ENCODE measurements at regions of chr2 and their contacts with region 1.

Region 1: DNA sequence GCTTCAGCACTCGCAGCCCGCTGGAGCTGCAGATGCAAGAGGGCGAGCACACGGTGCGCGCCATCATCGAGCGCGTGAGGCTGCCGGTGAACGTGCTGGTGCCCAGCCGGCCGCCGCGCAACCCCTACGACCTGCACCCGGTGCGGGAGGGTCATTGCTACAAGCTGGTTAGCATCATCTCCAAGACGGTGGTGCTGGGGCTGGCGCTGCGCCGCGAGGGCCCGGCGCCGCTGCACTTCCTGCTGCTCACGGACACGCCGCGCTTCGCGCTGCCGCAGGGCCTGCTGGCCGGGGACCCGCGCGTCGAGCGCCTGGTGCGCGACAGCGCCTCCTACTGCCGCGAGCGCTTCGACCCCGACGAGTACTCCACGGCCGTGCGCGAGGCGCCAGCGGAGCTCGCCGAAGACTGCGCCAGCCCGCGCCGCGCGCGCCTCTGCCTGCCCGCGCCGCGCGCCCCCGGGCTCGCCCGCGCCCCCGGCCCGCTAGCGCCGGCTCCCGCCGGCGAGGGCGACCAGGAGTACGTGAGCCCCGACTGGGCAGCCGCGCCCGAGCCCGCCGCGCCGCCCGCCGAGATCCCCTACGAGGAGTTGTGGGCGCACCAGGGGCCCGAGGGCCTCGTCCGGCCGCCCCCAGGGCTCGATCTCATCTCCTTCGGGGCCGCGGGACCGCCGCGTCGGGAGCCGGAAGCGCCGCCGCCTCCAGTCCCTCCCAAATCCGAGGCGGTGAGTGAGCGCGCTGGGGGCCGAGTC is 11.8 kb downstream of the GAREM2 start:
- DNase-seq: peak; percentile 7
- H3K4me3 ChIP-seq: peak overlapping the region; percentile 67
- CTCF ChIP-seq: peak; percentile 78

Region 2: DNA sequence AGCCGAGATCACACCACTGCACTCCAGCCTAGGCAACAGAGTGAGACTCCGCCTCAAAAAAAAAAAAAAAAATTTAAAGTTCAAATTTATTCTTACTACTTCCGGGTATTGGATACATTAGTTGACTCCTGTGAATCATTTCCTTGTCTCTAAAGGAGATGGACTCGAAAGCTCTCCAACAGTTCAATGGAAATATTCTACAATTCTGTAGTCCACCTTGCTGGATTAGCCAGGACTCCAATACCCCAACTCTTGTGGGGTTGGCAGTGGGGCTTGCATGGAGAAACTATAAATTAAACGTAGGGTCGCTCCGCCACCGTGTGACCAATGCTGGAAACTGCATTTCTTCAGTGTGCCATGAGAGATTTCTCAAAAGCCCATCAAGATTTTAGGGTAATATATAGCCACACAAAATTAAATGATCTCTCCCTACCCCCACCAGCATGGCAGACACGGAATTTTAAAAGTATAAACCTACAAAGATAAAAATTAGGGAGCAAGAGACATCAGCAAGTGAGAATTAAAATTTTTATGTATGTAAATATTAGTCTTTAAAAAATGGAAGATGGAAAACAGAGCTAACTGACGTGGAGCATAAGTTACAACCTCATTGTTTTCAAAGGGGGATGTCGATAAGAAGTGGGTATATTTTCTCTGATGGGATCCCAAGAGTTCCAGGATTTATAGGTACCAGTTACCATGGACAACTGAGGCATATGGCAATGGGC is 39.6 kb before region 1 on chr2:
- CTCF ChIA-PET with region 1: no interaction called
- POLR2A ChIA-PET with region 1: no interaction called
- DNase-seq: peak; percentile 14
- H3K4me3 ChIP-seq: no peak overlapping the region
- CTCF ChIP-seq: peak; percentile 61

Region 3: DNA sequence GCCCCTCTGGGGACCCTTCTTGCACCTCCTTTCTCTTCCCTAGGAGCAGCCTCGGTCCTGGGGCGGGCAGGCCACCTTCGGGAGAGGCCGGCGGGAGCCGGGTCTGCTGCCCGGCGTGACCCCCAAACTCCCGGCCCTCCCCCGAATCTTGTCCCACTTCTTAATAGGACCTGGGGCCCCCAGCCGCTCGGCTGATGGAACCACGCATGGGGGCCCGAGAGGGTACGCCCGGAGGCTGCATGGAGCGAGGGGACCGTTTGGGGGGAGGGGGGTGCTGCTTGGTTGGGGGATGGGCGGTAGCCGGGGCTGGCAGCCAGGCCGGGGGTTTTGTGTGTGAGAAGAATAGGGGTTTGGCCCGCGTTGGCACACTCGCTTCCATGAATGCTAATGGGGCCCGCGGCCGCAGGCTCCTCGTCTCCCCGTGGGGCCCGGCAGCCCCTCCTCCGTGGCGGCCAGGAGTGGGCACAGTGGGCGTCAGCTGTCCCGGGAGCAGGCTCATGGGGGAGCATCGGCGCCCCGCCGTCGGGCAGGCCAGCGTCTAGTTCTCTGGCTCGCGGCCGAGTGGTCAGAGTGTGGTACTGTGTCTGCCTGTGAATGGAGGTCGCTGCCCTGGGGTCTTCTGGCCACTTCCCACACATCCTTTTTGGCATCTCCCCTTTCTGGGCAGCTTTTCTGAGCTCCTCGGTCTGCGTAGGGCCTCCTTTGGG is 10.8 kb before region 1 on chr2:
- CTCF ChIA-PET with region 1: interaction called, 26 read pairs
- POLR2A ChIA-PET with region 1: interaction called, 4 read pairs
- DNase-seq: no peak
- H3K4me3 ChIP-seq: no peak overlapping the region
- CTCF ChIP-seq: no peak

Region 4: DNA sequence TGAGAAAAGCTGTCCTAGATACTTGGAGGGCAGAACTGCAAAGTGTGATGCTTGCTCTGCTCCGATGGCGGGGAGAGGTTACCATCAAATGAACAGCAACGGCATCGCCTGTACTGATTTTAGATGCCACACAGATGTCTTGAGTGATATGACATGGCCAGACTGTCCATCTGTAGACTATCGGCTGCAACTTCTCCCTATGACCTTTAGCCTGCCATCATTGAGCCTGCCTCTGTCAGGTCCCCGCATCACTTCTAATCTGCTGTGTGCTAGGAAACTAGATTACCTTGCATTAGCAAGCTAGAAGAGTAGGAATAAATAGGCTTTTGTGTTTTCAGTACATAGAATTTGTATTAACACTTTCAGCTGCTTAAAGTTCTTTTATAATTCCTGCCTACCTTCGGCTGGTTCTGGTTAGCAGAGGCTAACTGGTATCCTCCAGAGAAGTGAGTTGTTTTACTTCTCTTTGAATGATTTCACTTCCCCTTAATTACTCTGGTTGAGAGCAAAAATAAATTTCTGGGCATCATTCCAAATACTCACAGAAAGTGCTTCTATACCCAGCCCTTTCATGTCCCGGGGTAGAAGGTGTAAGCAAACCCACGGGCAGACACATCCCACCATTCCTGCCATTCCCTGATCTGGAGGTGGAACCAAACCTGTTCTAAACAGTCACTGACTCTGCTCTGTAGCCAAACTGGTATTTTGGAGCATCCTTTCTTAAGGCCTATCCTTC is 12.1 kb after region 1 on chr2:
- CTCF ChIA-PET with region 1: interaction called, 23 read pairs
- POLR2A ChIA-PET with region 1: interaction called, 4 read pairs
- DNase-seq: no peak
- H3K4me3 ChIP-seq: no peak overlapping the region
- CTCF ChIP-seq: no peak

Measured in AG04449 (cell line).